Left ventricle myocardium inferior (tissue), 1 donor: ENCODE measurements at regions of chr2 and their contacts with region 1.

Region 1: DNA sequence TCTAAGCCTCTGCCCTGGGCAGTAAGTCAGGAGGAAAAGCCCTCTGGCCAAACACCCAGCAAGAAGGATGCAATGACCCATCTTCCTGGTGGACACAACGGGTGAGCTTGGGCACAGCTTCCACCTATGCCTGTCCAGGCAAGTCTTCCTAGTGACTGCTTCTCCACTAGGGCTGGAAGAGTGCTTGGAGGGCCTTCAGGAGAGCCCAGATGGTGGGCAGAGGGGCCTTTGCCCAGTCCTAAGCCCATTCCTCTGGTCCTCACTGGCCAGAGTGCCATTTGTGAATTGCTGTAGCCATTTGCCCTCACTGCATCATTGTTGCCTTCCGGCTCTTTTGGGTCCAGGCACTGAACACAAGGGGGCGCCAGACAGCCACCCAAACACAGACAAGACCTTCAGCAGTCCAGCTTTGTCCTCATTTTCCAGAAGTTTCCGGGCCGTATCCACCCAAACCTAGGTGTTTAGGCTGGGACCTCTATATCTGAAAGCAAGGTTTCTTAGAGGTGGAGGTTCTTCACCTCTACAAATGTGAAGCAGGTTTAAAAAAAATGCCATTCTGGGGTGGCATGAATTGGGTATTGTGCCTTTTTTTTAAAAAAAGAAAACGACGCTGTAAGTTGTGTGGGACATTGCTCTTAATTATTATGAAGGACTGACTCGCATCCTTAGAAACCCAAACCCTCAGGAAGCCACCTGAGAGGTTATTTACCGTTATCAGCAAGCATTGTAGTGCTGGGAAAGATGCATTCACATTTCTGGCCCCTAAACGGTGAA is 29.5 kb downstream of the PAX8 start:
- DNase-seq: peak; percentile 77
- H3K4me3 ChIP-seq: no peak overlapping the region
- H3K27ac ChIP-seq: no peak overlapping the region
- H3K4me1 ChIP-seq: peaks cover 23% of the 10 kb centered on the region
- H3K27me3 ChIP-seq: no peaks in the 10 kb centered on the region
- CTCF ChIP-seq: peak; percentile 92

Region 2: DNA sequence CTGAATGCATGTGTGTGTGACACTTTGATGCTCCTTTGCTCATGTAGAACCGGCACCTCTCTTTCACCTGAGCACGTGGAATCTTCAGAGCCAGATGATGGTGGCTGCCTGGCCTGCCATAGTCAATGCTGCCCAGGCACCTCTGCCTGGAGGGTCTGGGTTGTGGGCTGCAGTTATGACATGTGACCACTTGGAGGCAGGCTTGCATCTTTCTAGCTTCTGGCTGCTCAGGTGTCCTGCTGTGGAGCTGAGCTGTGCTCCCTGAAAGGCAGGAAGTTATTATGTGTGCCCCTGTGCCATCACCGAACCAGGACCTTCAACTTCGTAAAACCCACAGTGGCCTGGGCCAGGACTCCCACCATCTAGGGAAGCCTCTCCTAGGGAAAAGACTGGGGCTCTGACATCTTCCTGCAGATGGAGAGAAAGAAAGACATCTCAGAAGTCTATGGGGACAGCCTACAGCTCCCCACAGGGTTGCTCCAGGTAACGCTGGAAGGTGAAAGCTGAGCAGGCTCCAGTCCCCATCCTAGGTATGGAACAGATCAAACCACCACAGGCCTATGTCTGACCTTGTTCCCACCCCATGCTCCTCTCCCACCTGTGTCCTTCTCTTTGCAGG is 45.2 kb before region 1 on chr2:
- intact Hi-C with region 1: loop called (anchors 10 kb)
- DNase-seq: peak; percentile 63
- H3K4me3 ChIP-seq: no peak overlapping the region
- H3K27ac ChIP-seq: no peak overlapping the region
- H3K4me1 ChIP-seq: peaks cover 7% of the 10 kb centered on the region
- H3K27me3 ChIP-seq: no peaks in the 10 kb centered on the region
- CTCF ChIP-seq: peak; percentile 92